Heart right ventricle (tissue), 16 donors: ENCODE measurements at regions of chrX and their contacts with region 1.

Region 1: GRCh38 chrX:23782863-23783568 is at the start of gene SAT1:
- DNase-seq: peak; percentile 94 to 96
- ATAC-seq: peak; percentile 94 to 97 (median 96)
- H3K4me3 ChIP-seq: peak within 1 kb of the TSS; percentile 57 to 86 (median 78)
- H3K27ac ChIP-seq: peak within 1 kb of the TSS; percentile 83 to 97 (median 94)
- H3K4me1 ChIP-seq: peaks cover 0 to 32% (median 6%) of the 10 kb centered on the region in 9 donors
- H3K27me3 ChIP-seq: no peaks in the 10 kb centered on the region
- CTCF ChIP-seq: peak; percentile 65 to 86 (median 79)
- total RNA-seq, gene SAT1: 73.5 to 273 (median 102) TPM

Region 2: DNA sequence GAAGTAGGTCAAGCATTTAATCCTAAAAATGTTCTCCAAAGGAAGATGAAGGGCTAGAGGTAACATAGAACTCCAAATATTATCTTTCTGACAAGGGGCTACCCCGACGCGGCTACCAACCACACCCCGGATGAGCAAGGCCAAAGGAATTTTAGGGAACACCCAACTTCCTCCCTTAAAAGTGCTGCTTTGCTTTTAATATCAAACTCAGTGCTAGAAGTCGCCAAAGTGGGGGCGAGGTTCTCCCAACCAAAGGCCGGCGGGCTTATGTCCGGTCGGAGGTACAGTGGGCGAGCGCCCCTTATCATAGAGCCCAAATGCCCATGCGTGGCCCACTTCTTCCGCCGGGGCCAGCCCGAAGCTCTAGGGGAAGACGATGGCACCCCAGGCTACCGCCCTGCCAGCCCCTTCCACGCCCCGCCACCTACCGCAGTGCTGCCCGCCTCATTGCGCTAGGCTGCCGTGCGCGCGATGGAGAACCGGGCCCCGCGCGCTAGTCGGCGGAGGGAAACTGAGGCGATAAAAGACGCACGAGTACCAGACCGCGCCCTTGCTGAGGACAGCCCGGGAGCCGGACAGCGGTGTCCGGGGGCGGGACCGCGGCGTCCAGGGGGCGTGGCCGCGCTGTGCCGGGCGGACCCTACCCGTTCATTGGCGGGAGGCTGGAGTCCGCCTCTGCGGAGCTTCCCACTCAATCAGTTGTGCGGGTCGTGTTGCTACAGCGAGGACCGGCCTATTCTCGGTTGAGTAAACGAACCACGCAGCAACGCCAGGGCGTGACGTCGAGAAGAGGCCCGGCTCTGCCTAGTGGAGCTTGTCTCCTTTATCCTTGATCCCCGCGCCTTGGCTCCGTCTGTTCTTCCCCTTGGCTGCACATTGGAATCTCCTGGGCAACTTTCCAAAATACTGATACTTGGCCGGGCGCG is 40.1 kb before region 1 on chrX and contains the start of gene ACOT9:
- intact Hi-C with region 1: loop called in 3 of 10 experiments (anchors 1 to 5 kb)
- DNase-seq: peak; percentile 91 to 93
- ATAC-seq: peak; percentile 97 to 99 (median 98)
- H3K4me3 ChIP-seq: peak within 1 kb of the TSS; percentile 55 to 94 (median 78)
- H3K27ac ChIP-seq: peak within 1 kb of the TSS; percentile 94 to 99 (median 96)
- H3K4me1 ChIP-seq: peaks cover 0 to 14% (median 9%) of the 10 kb centered on the region in 9 donors
- H3K27me3 ChIP-seq: no peaks in the 10 kb centered on the region
- CTCF ChIP-seq: no peak
- total RNA-seq, gene ACOT9: 44.8 to 79.7 (median 64.6) TPM

Region 3: DNA sequence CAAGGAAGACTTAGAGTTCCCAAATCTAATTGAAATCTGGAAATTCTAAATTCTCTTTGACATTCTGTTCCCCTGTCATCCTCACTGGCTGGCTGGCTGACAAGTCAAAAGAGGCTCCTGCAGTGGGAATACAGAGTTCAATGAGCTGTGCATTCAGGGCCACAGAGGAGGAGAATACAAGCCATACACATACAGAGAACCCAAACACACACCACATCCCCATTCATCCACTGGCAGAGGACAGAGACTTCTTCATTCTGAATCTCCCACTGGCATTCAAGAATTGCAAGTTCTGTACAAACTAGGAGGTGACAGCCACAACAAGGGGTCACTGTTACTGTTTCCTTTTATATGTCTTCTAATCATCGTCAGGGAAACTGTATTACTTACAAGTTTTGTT is 49.7 kb after region 1 on chrX:
- intact Hi-C with region 1: no loop called
- DNase-seq: no peak
- ATAC-seq: no peak
- H3K4me3 ChIP-seq: no peak overlapping the region
- H3K27ac ChIP-seq: no peak overlapping the region
- H3K4me1 ChIP-seq: no peaks in the 10 kb centered on the region
- H3K27me3 ChIP-seq: no peaks in the 10 kb centered on the region
- CTCF ChIP-seq: no peak

Region 4: GRCh38 chrX:23901805-23902204 is 118.8 kb after region 1 on chrX:
- intact Hi-C with region 1: loop called in 9 of 10 experiments (anchors 1 to 10 kb)
- DNase-seq: peak in 1 of 2 donors; percentile 54
- ATAC-seq: peak; percentile 86 to 95 (median 91)
- H3K4me3 ChIP-seq: peak overlapping the region in 6 of 10 donors; percentile 3 to 43 (median 34)
- H3K27ac ChIP-seq: peak overlapping the region in 9 of 10 donors; percentile 55 to 81 (median 70)
- H3K4me1 ChIP-seq: peaks cover 0 to 49% (median 19%) of the 10 kb centered on the region in 9 donors
- H3K27me3 ChIP-seq: peaks cover 0 to 19% (median 0%) of the 10 kb centered on the region in 7 donors
- CTCF ChIP-seq: peak; percentile 19 to 65 (median 42)

Region 5: GRCh38 chrX:24024819-24025740 is 242.1 kb after region 1 on chrX:
- intact Hi-C with region 1: loop called in 1 of 10 experiments (anchors 5 kb)
- DNase-seq: peak; percentile 88 to 89
- ATAC-seq: peak; percentile 94 to 98 (median 95)
- H3K4me3 ChIP-seq: peak overlapping the region; percentile 66 to 94 (median 80)
- H3K27ac ChIP-seq: peak overlapping the region; percentile 93 to 97 (median 96)
- H3K4me1 ChIP-seq: peaks cover 0 to 15% (median 4%) of the 10 kb centered on the region in 9 donors
- H3K27me3 ChIP-seq: peaks cover 0 to 88% (median 0%) of the 10 kb centered on the region in 7 donors
- CTCF ChIP-seq: peak in 6 of 9 donors; percentile 17 to 50 (median 34)

Region 6: GRCh38 chrX:24759786-24760185 is 976.8 kb after region 1 on chrX:
- intact Hi-C with region 1: loop called in 1 of 10 experiments (anchors 5 kb)
- DNase-seq: no peak
- ATAC-seq: no peak
- H3K4me3 ChIP-seq: no peak overlapping the region
- H3K27ac ChIP-seq: no peak overlapping the region
- H3K4me1 ChIP-seq: peaks cover 0 to 9% (median 0%) of the 10 kb centered on the region in 9 donors
- H3K27me3 ChIP-seq: no peaks in the 10 kb centered on the region
- CTCF ChIP-seq: no peak